CD4-positive, alpha-beta memory T cell (primary cell): ENCODE measurements at regions of chr4 and their contacts with region 1.

Region 1: GRCh38 chr4:83455281-83456129 is at the starts of genes HELQ and MRPS18C:
- DNase-seq: peak; percentile 94 to 98 (median 98)
- H3K4me3 ChIP-seq: peak within 1 kb of the TSS; percentile 90 to 96
- H3K4me3 Mint-ChIP-seq: peak within 1 kb of the TSS; percentile 99 to 100 (median 100)
- H3K27ac ChIP-seq: peak within 1 kb of the TSS; percentile 100
- H3K27ac Mint-ChIP-seq: peak within 1 kb of the TSS; percentile 100
- H3K4me1 ChIP-seq: peaks cover 37% of the 10 kb centered on the region
- H3K4me1 Mint-ChIP-seq: peaks cover 29 to 64% (median 42%) of the 10 kb centered on the region in 4 donors
- H3K27me3 ChIP-seq: no peaks in the 10 kb centered on the region
- H3K27me3 Mint-ChIP-seq: no peaks in the 10 kb centered on the region
- total RNA-seq, gene HELQ: 48.1 to 49.0 TPM
- total RNA-seq, gene MRPS18C: 45.7 to 51.4 TPM

Region 2: DNA sequence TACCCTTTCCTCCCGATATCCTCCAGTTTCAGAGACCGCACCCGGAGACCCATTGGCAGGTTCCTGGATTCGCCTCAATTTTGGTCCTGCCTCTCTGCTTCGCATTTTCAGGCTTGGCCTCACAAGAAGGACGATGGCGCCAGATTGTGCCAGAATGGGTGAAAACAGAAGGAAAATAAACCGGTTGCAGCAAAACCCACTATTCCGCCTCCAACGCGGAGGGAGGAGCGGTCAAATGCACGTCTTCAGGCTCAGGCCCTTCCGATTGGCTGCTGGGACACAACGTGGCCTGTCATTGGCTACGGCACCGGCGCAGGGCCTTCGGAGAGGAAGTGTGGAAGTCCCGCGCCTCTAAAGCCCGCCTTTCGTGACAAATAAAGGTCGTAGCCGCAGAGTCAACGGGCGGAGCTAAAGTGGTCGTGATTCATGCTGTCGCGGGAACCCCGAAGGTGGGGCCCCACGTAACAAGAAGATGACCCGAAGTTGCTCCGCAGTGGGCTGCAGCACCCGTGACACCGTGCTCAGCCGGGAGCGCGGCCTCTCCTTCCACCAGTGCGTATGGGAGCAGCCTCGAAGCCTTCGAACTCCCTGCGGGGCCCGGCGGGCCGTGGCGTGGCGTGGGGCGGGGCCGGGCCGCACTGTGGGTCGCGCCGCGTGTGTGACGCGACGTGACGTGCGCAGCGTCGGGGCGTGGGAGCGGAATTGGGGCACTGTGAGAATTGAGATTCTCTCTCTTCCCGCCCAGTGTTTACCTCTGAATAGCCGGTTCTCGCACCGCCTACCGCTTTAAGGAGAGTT is 555.0 kb before region 1 on chr4 and contains the start of gene THAP9:
- CTCF ChIA-PET with region 1: no interaction called
- POLR2A ChIA-PET with region 1: interaction called, 10 read pairs
- intact Hi-C with region 1: loop called (anchors 1 kb)
- DNase-seq: peak; percentile 98 to 100 (median 99)
- H3K4me3 ChIP-seq: peak within 1 kb of the TSS; percentile 92 to 99
- H3K4me3 Mint-ChIP-seq: no peak within 1 kb of the TSS
- H3K27ac ChIP-seq: peak within 1 kb of the TSS; percentile 98
- H3K27ac Mint-ChIP-seq: no peak within 1 kb of the TSS
- H3K4me1 ChIP-seq: peaks cover 47% of the 10 kb centered on the region
- H3K4me1 Mint-ChIP-seq: peaks cover 10 to 20% (median 16%) of the 10 kb centered on the region in 4 donors
- H3K27me3 ChIP-seq: no peaks in the 10 kb centered on the region
- H3K27me3 Mint-ChIP-seq: no peaks in the 10 kb centered on the region
- total RNA-seq, gene THAP9: 2.7 to 3.7 TPM

Region 3: GRCh38 chr4:83034630-83035494 is 420.6 kb before region 1 on chr4 and contains the start of gene COPS4:
- CTCF ChIA-PET with region 1: interaction called, 3 read pairs
- POLR2A ChIA-PET with region 1: interaction called, 18 read pairs
- intact Hi-C with region 1: loop called (anchors 2 kb)
- DNase-seq: peak; percentile 93 to 99 (median 98)
- H3K4me3 ChIP-seq: peak within 1 kb of the TSS; percentile 76 to 84
- H3K4me3 Mint-ChIP-seq: peak within 1 kb of the TSS; percentile 98 to 100 (median 100)
- H3K27ac ChIP-seq: peak within 1 kb of the TSS; percentile 85
- H3K27ac Mint-ChIP-seq: peak within 1 kb of the TSS; percentile 94 to 100 (median 99)
- H3K4me1 ChIP-seq: peaks cover 25% of the 10 kb centered on the region
- H3K4me1 Mint-ChIP-seq: peaks cover 15 to 41% (median 25%) of the 10 kb centered on the region in 4 donors
- H3K27me3 ChIP-seq: no peaks in the 10 kb centered on the region
- H3K27me3 Mint-ChIP-seq: no peaks in the 10 kb centered on the region
- total RNA-seq, gene COPS4: 24.6 to 26.1 TPM

Region 4: GRCh38 chr4:83440899-83441298 is 14.6 kb before region 1 on chr4:
- CTCF ChIA-PET with region 1: interaction called, 4 read pairs
- POLR2A ChIA-PET with region 1: interaction called, 23 read pairs
- intact Hi-C with region 1: no loop called
- DNase-seq: no peak
- H3K4me3 ChIP-seq: no peak overlapping the region
- H3K4me3 Mint-ChIP-seq: no peak overlapping the region
- H3K27ac ChIP-seq: no peak overlapping the region
- H3K27ac Mint-ChIP-seq: no peak overlapping the region
- H3K4me1 ChIP-seq: no peaks in the 10 kb centered on the region
- H3K4me1 Mint-ChIP-seq: peaks cover 2 to 10% (median 4%) of the 10 kb centered on the region in 4 donors
- H3K27me3 ChIP-seq: no peaks in the 10 kb centered on the region
- H3K27me3 Mint-ChIP-seq: no peaks in the 10 kb centered on the region

Region 5: GRCh38 chr4:83535520-83536361 is 80.2 kb after region 1 on chr4 and contains the start of gene GPAT3:
- CTCF ChIA-PET with region 1: no interaction called
- POLR2A ChIA-PET with region 1: interaction called, 3 read pairs
- intact Hi-C with region 1: loop called (anchors 1 kb)
- DNase-seq: peak; percentile 58 to 73 (median 67)
- H3K4me3 ChIP-seq: peak within 1 kb of the TSS; percentile 75
- H3K4me3 Mint-ChIP-seq: peak within 1 kb of the TSS; percentile 90 to 99 (median 94)
- H3K27ac ChIP-seq: peak within 1 kb of the TSS; percentile 29
- H3K27ac Mint-ChIP-seq: peak within 1 kb of the TSS; percentile 79 to 95 (median 89)
- H3K4me1 ChIP-seq: peaks cover 21% of the 10 kb centered on the region
- H3K4me1 Mint-ChIP-seq: peaks cover 21 to 38% (median 28%) of the 10 kb centered on the region in 4 donors
- H3K27me3 ChIP-seq: no peaks in the 10 kb centered on the region
- H3K27me3 Mint-ChIP-seq: peaks cover 3 to 7% of the 10 kb centered on the region in 2 donors
- total RNA-seq, gene GPAT3: 7.8 to 8.8 TPM

Region 6: DNA sequence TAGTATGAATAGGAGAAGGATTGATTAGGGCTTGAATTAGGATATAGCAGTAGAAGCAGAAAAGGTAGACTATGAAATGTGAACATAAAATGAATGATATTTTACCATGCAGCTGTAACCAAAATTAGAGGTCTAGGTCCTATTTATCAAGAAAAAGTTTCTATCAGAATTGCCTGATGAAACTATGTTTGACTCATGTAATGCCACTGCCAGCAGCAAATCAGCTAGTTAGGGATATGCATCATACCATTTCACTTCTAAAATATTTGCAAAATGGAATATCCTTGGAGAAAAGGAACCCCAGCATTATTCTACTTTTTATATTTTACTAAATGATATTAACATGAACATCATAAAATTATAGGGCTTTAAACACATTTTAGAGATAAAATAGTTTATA is 1322.5 kb after region 1 on chr4:
- CTCF ChIA-PET with region 1: no interaction called
- POLR2A ChIA-PET with region 1: no interaction called
- intact Hi-C with region 1: no loop called
- DNase-seq: no peak
- H3K4me3 ChIP-seq: no peak overlapping the region
- H3K4me3 Mint-ChIP-seq: no peak overlapping the region
- H3K27ac ChIP-seq: no peak overlapping the region
- H3K27ac Mint-ChIP-seq: no peak overlapping the region
- H3K4me1 ChIP-seq: no peaks in the 10 kb centered on the region
- H3K4me1 Mint-ChIP-seq: no peaks in the 10 kb centered on the region
- H3K27me3 ChIP-seq: no peaks in the 10 kb centered on the region
- H3K27me3 Mint-ChIP-seq: no peaks in the 10 kb centered on the region